ENCODE measurements at regions of chr9 and their contacts with region 1.

Region 1: GRCh38 chr9:121954477-121955140 is 138.5 kb downstream of the TTLL11 start:
- DNase-seq: no peak
- ATAC-seq: no peak
- H3K4me3 Mint-ChIP-seq: no peak overlapping the region
- H3K27ac Mint-ChIP-seq: no peak overlapping the region
- H3K4me1 Mint-ChIP-seq: peaks cover 9% of the 10 kb centered on the region
- H3K27me3 Mint-ChIP-seq: no peaks in the 10 kb centered on the region
- CTCF ChIP-seq: no peak

Region 2: GRCh38 chr9:121819428-121820231 is 135.0 kb before region 1 on chr9:
- CTCF ChIA-PET with region 1: no interaction called
- POLR2A ChIA-PET with region 1: interaction called, 13 read pairs
- intact Hi-C with region 1: no loop called
- DNase-seq: no peak
- ATAC-seq: no peak
- H3K4me3 Mint-ChIP-seq: no peak overlapping the region
- H3K27ac Mint-ChIP-seq: no peak overlapping the region
- H3K4me1 Mint-ChIP-seq: peaks cover 10% of the 10 kb centered on the region
- H3K27me3 Mint-ChIP-seq: peaks cover 7% of the 10 kb centered on the region
- CTCF ChIP-seq: no peak

Region 3: GRCh38 chr9:121929893-121930875 is 24.4 kb before region 1 on chr9:
- CTCF ChIA-PET with region 1: no interaction called
- POLR2A ChIA-PET with region 1: no interaction called
- intact Hi-C with region 1: no loop called
- DNase-seq: no peak
- ATAC-seq: no peak
- H3K4me3 Mint-ChIP-seq: no peak overlapping the region
- H3K27ac Mint-ChIP-seq: no peak overlapping the region
- H3K4me1 Mint-ChIP-seq: no peaks in the 10 kb centered on the region
- H3K27me3 Mint-ChIP-seq: no peaks in the 10 kb centered on the region
- CTCF ChIP-seq: no peak

Region 4: GRCh38 chr9:121976751-121977150 is 22.1 kb after region 1 on chr9:
- CTCF ChIA-PET with region 1: no interaction called
- POLR2A ChIA-PET with region 1: no interaction called
- intact Hi-C with region 1: no loop called
- DNase-seq: no peak
- ATAC-seq: no peak
- H3K4me3 Mint-ChIP-seq: no peak overlapping the region
- H3K27ac Mint-ChIP-seq: no peak overlapping the region
- H3K4me1 Mint-ChIP-seq: peaks cover 19% of the 10 kb centered on the region
- H3K27me3 Mint-ChIP-seq: no peaks in the 10 kb centered on the region
- CTCF ChIP-seq: no peak